ENCODE measurements at regions of chr2 and their contacts with region 1.

Region 1: DNA sequence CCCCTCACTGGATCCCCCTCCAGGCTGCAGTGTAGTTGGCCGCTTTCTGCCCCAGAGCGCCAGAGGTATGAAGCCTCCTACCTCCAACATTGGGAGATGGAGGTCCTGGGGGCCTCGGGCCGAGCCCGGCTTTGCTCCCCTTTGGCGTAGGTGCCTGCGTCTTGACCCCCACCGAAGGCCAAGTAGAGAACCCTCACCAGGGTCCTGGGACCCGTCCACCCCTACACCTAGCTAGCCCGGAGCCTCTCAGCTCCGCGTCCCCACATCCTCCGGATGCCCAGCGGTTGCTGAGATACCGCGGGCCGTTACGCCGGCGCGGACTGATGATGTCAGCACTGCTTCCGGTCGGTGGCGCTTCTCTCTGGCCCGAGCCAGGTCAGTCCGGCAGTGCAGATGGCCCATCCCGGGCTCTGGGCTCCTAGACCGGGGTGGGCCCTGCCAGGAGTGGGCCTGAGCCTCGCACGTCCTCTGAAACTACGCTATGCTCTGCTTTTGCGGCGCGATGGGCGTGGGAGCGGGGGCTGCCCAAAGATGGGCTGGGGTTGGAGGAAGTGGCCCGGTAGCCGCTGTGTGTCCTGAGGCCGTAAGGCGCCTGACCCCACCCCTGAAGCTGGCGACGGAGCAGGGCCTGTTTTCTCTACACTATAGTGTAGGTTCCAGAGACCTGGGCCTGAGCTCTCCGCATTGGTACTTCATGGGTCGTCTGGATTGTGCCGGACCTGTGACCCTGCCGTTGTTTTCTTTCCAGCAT is at the starts of genes GLB1L and STK16:
- DNase-seq: peak; percentile 70 to 92 (median 85)
- ATAC-seq: peak; percentile 61 to 62
- H3K4me3 Mint-ChIP-seq: peak within 1 kb of the TSS; percentile 84 to 100 (median 96)
- H3K27ac Mint-ChIP-seq: peak within 1 kb of the TSS; percentile 94 to 99 (median 98)
- H3K4me1 Mint-ChIP-seq: peaks cover 19 to 70% (median 69%) of the 10 kb centered on the region in 4 donors
- H3K27me3 Mint-ChIP-seq: no peaks in the 10 kb centered on the region
- polyA plus RNA-seq, gene GLB1L: 0.62 to 1.8 (median 1.7) TPM
- polyA plus RNA-seq, gene STK16: 21.6 to 25.8 (median 23.7) TPM

Region 2: GRCh38 chr2:219057709-219058540 is 187.4 kb before region 1 on chr2:
- POLR2A ChIA-PET with region 1: no interaction called
- DNase-seq: peak; percentile 56 to 82 (median 73)
- ATAC-seq: peak; percentile 90 to 96
- H3K4me3 Mint-ChIP-seq: peak overlapping the region in 9 of 10 donors; percentile 49 to 80 (median 67)
- H3K27ac Mint-ChIP-seq: peak overlapping the region in 1 of 10 donors; percentile 65
- H3K4me1 Mint-ChIP-seq: peaks cover 15 to 28% (median 20%) of the 10 kb centered on the region in 4 donors
- H3K27me3 Mint-ChIP-seq: peaks cover 35 to 85% (median 48%) of the 10 kb centered on the region in 5 donors

Region 3: DNA sequence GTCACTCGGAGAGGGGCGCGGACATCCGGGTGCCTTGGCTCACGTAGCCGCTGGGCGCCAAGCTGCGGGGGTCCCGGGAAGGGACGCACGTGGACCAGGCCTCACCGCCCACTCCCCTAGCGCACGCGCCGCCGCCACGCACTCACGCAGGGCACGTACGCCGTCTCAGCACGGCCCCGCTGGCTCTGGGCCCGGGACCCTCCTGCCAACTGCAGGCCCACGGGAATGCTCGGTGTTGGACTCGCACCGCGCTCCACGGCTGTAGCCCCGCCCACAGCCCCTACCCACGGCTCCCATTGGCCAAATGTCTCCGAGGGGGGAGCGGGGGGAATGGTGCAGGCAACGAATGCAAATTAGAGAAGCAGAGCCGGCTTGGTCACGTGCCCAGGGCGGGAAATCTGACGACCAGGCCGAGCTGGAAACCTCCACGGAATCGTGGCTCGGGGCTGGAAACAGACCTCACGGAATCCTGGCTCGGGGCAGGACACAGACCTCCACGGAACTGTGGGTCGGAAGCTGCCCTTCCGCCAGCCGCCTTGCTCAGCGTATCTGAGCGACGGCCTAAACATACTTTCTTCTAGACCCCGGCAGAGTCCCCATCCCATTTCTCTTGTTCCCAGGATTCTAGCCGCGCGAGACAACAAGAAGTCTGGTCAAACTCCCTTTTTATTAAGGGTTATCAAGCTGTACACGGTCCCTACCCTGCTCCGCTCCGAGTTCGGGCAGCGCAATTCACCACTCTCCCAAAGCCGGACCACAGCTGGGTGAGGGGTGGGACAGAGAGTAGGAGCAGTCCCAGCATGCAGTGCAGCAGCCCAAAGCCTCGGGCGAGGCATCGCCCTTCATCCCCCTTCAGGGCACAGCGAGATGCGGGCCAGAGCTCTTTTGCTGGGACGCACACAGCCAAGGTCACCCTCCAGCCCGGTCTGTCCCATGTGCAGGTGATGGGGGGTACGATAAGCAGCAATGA is 26.3 kb before region 1 on chr2 and contains the start of gene ABCB6:
- POLR2A ChIA-PET with region 1: interaction called, 134 read pairs
- DNase-seq: peak; percentile 74 to 94 (median 84)
- ATAC-seq: peak; percentile 92
- H3K4me3 Mint-ChIP-seq: peak within 1 kb of the TSS; percentile 75 to 91 (median 82)
- H3K27ac Mint-ChIP-seq: peak within 1 kb of the TSS; percentile 17 to 89 (median 82)
- H3K4me1 Mint-ChIP-seq: peaks cover 17 to 31% (median 26%) of the 10 kb centered on the region in 4 donors
- H3K27me3 Mint-ChIP-seq: no peaks in the 10 kb centered on the region
- polyA plus RNA-seq, gene ABCB6: 1.6 to 4.9 (median 1.8) TPM

Region 4: DNA sequence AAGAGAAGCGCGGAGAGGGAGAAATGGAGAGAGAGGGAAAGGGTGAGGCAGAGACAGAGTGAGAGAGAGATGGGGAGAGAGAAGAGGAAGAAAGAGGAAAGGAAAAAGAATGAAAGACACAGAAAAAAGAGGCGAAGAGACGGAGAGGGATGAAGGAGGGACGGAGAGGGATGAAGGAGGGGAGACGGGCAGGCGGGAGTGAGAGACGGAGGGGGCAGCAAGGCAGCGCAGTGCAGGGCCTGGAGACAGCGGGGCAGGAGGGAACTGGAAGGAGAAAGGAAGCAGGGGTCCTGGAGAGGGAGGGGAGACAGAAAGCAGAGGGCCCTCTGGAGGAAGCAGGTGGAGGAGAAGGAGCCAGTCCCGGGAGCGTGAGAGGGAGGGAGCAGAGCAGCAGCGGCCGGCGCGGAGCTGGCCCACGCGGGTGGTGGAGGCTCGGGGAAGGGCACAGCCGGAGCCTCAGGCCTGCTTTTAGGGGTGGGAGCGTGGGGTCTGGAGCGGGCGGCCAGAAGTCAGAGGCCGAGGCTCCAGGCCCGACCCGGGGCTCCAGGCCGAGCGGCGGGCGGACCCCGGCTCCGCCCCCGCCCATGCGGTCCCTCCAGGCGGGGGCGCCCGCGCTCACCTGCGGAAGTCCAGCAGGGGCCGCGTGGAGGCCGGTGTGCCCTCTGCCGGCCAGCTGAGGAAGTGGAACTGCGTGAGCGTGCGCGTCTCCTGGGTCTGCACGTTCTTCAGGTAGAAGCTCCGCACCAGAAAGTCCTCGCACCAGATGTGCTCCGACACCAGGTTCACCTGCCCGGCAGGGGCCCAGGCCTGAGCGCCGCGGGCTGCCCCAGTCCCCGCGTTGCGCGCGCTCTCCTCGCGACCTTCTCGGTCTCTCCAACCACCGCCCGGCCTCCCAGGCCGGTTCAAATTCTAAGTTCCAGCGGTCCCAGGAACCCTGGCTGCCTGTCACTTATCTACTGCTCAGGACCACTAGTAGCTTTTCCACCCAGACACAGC is 49.3 kb after region 1 on chr2:
- POLR2A ChIA-PET with region 1: interaction called, 23 read pairs
- DNase-seq: peak; percentile 79 to 92 (median 90)
- ATAC-seq: peak; percentile 89 to 92
- H3K4me3 Mint-ChIP-seq: peak overlapping the region; percentile 62 to 82 (median 76)
- H3K27ac Mint-ChIP-seq: peak overlapping the region in 9 of 10 donors; percentile 32 to 93 (median 81)
- H3K4me1 Mint-ChIP-seq: peaks cover 13 to 44% (median 37%) of the 10 kb centered on the region in 4 donors
- H3K27me3 Mint-ChIP-seq: peaks cover 0 to 3% (median 0%) of the 10 kb centered on the region in 5 donors

Region 5: DNA sequence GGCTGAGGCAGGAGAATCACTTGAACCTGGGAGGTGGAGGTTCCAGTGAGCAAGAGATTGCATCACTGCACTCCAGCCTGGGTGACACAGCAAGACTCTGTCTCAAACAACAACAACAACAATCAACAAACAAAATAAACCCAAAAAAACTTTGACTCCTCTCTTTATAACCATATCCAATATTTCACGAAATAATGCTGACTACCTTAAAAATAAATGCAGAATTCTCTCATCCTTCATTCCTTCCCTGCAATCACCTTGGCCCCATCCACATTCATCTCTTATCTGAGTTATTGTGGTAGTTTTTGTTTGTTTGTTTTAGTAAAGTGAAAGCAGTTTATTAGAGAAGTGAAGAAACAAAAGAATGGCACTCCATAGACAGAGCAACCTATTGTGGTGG is 60.7 kb after region 1 on chr2:
- POLR2A ChIA-PET with region 1: no interaction called
- DNase-seq: no peak
- ATAC-seq: no peak
- H3K4me3 Mint-ChIP-seq: no peak overlapping the region
- H3K27ac Mint-ChIP-seq: no peak overlapping the region
- H3K4me1 Mint-ChIP-seq: peaks cover 0 to 7% (median 2%) of the 10 kb centered on the region in 4 donors
- H3K27me3 Mint-ChIP-seq: peaks cover 30 to 65% (median 54%) of the 10 kb centered on the region in 5 donors

Region 6: DNA sequence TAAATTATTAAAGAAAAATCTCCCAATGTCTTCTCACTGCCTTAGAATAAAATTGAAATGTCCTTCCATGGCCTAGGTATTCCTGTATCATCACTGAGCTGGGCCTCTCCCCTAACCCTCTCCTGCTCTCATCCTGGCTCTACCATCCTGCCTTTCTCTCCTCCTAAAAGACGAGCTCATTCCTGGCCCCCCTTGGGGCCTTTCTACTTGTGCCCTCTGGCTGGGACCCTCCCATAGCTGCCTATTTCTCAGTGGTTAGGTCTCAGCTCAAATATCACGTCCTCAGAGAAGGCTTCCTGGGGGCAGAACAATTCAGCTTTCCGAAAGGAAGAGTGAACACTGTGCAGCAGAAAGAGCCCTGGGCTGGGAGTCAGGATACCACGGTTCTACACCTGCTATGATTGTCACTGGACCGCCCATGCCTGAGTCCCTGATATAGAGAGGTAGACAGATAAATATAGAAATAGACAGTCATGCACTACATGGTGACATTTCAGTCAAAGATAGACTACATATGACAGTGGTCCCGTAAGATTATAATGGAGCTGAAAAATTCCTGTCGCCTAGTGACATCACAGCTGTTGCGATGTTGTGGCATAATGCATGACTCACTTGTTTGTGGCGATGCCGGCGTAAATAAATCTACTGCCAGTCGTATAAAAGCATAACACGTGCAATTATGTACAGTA is 133.0 kb after region 1 on chr2:
- POLR2A ChIA-PET with region 1: no interaction called
- DNase-seq: no peak
- ATAC-seq: no peak
- H3K4me3 Mint-ChIP-seq: no peak overlapping the region
- H3K27ac Mint-ChIP-seq: peak overlapping the region in 2 of 10 donors; percentile 17 to 70
- H3K4me1 Mint-ChIP-seq: peaks cover 0 to 6% (median 2%) of the 10 kb centered on the region in 4 donors
- H3K27me3 Mint-ChIP-seq: no peaks in the 10 kb centered on the region

Measured in naive thymus-derived CD8-positive, alpha-beta T cell (primary cell).